Caco-2 (cell line): ENCODE measurements at regions of chr5 and their contacts with region 1.

Region 1: GRCh38 chr5:32092938-32093812 is 80.9 kb downstream of the GOLPH3 start:
- DNase-seq: peak; percentile 73 to 75
- H3K4me3 ChIP-seq: no peak overlapping the region
- H3K4me3 Mint-ChIP-seq: no peak overlapping the region
- H3K27ac Mint-ChIP-seq: no peak overlapping the region
- H3K4me1 ChIP-seq: no peaks in the 10 kb centered on the region
- H3K4me1 Mint-ChIP-seq: no peaks in the 10 kb centered on the region
- H3K27me3 ChIP-seq: no peaks in the 10 kb centered on the region
- H3K27me3 Mint-ChIP-seq: no peaks in the 10 kb centered on the region
- CTCF ChIP-seq: peak; percentile 63 to 75

Region 2: GRCh38 chr5:31531888-31532710 is 561.1 kb before region 1 on chr5 and contains the starts of genes C5orf22 and DROSHA:
- CTCF ChIA-PET with region 1: no interaction called
- POLR2A ChIA-PET with region 1: no interaction called
- intact Hi-C with region 1: loop called (anchors 5 kb)
- DNase-seq: peak; percentile 95 to 96
- H3K4me3 ChIP-seq: peak within 1 kb of the TSS; percentile 79
- H3K4me3 Mint-ChIP-seq: peak within 1 kb of the TSS; percentile 94
- H3K27ac Mint-ChIP-seq: peak within 1 kb of the TSS; percentile 98
- H3K4me1 ChIP-seq: 0 out of 2 replicates have a peak, but pooled peaks cover 16% of the 10 kb centered on the region
- H3K4me1 Mint-ChIP-seq: peaks cover 17% of the 10 kb centered on the region
- H3K27me3 ChIP-seq: no peaks in the 10 kb centered on the region
- H3K27me3 Mint-ChIP-seq: no peaks in the 10 kb centered on the region
- CTCF ChIP-seq: peak in 1 of 2 experiments; percentile 25
- total RNA-seq, gene C5orf22: 27.9 and 31.9 TPM in 2 replicates
- total RNA-seq, gene DROSHA: 88.4 and 88.9 TPM in 2 replicates

Region 3: DNA sequence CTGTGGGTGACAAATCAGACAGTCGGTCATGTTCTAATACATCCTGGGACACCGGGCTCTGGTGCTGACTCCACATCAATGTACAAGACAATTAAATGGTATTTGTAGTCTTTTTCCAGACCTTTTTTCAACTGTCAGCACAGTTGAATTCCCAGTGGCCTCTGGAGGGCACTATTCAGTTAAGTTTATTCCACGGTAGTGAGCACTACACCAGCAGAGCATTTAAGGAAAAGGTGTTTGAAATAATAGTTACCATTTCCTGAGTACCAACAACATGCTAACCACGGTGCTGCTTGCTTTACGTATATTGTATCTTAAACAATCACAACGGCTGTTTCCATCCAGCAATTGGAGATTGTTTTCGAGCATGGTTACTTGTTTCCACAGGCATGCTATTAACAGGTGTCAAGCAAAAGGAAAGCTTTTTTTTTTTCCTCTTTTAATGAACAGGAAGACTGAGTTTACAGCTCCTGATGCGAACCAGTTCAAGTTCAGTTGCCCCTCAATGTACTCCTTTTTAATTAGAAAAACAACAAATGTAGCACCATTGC is 267.6 kb before region 1 on chr5:
- CTCF ChIA-PET with region 1: interaction called, 7 read pairs
- POLR2A ChIA-PET with region 1: no interaction called
- intact Hi-C with region 1: loop called (anchors 1 kb)
- DNase-seq: peak; percentile 43 to 55
- H3K4me3 ChIP-seq: no peak overlapping the region
- H3K4me3 Mint-ChIP-seq: no peak overlapping the region
- H3K27ac Mint-ChIP-seq: no peak overlapping the region
- H3K4me1 ChIP-seq: no peaks in the 10 kb centered on the region
- H3K4me1 Mint-ChIP-seq: no peaks in the 10 kb centered on the region
- H3K27me3 ChIP-seq: no peaks in the 10 kb centered on the region
- H3K27me3 Mint-ChIP-seq: no peaks in the 10 kb centered on the region
- CTCF ChIP-seq: peak; percentile 55 to 66

Region 4: GRCh38 chr5:31833005-31833404 is 260.2 kb before region 1 on chr5:
- CTCF ChIA-PET with region 1: no interaction called
- POLR2A ChIA-PET with region 1: no interaction called
- intact Hi-C with region 1: loop called (anchors 2 kb)
- DNase-seq: no peak
- H3K4me3 ChIP-seq: no peak overlapping the region
- H3K4me3 Mint-ChIP-seq: no peak overlapping the region
- H3K27ac Mint-ChIP-seq: no peak overlapping the region
- H3K4me1 ChIP-seq: no peaks in the 10 kb centered on the region
- H3K4me1 Mint-ChIP-seq: no peaks in the 10 kb centered on the region
- H3K27me3 ChIP-seq: no peaks in the 10 kb centered on the region
- H3K27me3 Mint-ChIP-seq: no peaks in the 10 kb centered on the region
- CTCF ChIP-seq: no peak

Region 5: GRCh38 chr5:31921852-31922305 is 171.3 kb before region 1 on chr5:
- CTCF ChIA-PET with region 1: no interaction called
- POLR2A ChIA-PET with region 1: no interaction called
- intact Hi-C with region 1: loop called (anchors 5 kb)
- DNase-seq: no peak
- H3K4me3 ChIP-seq: no peak overlapping the region
- H3K4me3 Mint-ChIP-seq: no peak overlapping the region
- H3K27ac Mint-ChIP-seq: no peak overlapping the region
- H3K4me1 ChIP-seq: no peaks in the 10 kb centered on the region
- H3K4me1 Mint-ChIP-seq: no peaks in the 10 kb centered on the region
- H3K27me3 ChIP-seq: no peaks in the 10 kb centered on the region
- H3K27me3 Mint-ChIP-seq: peaks cover 9% of the 10 kb centered on the region
- CTCF ChIP-seq: no peak

Region 6: DNA sequence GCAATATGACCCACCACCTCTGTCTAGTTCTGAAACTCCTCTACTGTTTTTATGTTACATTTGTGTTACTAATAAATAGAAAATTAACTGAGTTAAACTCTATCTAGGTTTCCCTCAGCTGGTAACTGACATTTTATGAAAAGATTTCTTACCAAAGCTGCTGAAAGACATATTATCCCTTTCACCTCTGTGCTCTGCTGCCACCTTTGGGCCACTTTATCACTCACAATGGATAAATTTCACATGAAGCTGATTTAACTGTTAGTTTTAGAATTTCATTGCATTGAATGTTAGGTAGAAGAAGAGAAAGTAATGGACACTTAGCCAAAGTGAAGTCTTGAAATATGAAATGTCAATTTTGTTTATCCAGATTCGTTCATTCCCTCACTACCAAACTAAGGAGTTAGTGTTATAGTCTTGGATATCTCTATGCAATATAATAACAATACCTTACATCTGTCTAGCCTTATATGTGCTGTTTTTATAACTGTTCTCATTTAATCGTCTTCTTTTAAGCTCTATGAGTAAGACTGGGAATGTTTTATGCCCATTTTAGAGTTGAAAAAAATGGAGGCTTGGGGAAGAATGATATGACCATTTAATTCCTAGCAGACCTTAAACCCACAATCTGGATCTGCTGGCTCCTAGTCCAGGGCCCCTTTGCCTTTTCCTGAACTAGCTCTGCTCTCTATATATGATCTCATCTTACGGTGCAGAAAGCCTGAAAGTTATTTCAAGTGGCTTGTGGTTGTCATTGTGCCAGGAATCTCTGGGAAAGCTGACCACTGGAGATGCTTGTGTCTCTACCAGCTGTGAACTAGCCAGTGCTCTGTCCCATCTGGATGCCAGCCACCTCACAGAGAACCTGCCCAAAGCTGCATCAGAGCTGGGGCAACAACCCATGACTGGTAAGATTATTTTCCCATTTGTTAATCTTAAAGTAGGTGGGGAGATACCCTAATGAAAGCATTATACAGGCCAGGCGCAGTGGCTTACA is 16.2 kb before region 1 on chr5:
- CTCF ChIA-PET with region 1: interaction called, 17 read pairs
- POLR2A ChIA-PET with region 1: no interaction called
- intact Hi-C with region 1: no loop called
- DNase-seq: peak in 1 of 2 experiments; percentile 49
- H3K4me3 ChIP-seq: no peak overlapping the region
- H3K4me3 Mint-ChIP-seq: no peak overlapping the region
- H3K27ac Mint-ChIP-seq: no peak overlapping the region
- H3K4me1 ChIP-seq: no peaks in the 10 kb centered on the region
- H3K4me1 Mint-ChIP-seq: no peaks in the 10 kb centered on the region
- H3K27me3 ChIP-seq: no peaks in the 10 kb centered on the region
- H3K27me3 Mint-ChIP-seq: no peaks in the 10 kb centered on the region
- CTCF ChIP-seq: peak; percentile 74 to 75